ENCODE measurements at regions of chr19 and their contacts with region 1.

Region 1: GRCh38 chr19:38514812-38515633 is 81.5 kb downstream of the RYR1 start:
- DNase-seq: peak; percentile 49 to 77 (median 69)
- H3K4me3 ChIP-seq: no peak overlapping the region
- H3K27ac ChIP-seq: no peak overlapping the region
- H3K4me1 ChIP-seq: no peaks in the 10 kb centered on the region
- H3K27me3 ChIP-seq: no peaks in the 10 kb centered on the region
- CTCF ChIP-seq: peak; percentile 66 to 86 (median 76)
- POLR2A ChIP-seq: no peak

Region 2: DNA sequence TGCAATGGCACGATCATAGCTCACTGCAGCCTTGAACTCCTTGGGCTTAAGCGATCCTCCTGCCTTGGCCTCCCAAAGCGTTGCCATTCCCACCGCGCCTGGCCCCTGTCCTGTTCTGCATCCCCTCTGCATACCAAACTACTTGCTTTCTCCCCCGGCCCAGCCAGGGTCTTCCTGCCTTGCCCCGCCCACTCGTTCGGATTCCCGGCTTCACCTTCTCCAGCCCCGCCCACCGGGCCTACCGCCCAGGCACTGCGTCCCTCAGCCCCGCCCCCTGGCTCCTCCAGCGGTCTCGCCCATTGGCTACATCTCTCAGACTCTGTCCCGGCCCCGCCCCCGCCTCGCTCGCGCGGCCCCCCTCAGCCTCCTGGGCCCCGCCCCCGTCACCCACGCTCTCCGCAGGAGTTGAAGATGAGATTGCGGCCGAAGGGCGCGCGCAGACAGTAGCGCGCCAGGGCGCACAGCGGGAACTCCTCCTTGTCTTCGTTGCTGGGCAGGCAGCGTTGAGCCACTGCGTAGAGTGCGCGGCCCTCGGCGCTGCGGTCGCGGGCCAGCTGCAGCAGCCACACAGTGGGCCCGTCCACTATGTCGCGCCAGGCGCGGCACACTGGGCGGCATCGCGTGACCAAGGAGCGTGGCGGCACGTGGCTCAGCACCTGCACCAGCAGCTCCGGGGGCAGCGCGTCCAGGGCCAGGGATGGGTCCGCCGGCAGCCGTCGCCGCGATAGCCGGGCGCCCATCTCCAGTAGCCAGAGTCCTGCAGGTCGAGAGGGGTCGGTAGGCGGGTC is 434.8 kb after region 1 on chr19:
- intact Hi-C with region 1: loop called in 1 of 2 experiments (anchors 10 kb)
- DNase-seq: peak; percentile 90 to 96 (median 94)
- H3K4me3 ChIP-seq: peak overlapping the region in 2 of 4 donors; percentile 13 to 56
- H3K27ac ChIP-seq: no peak overlapping the region
- H3K4me1 ChIP-seq: peaks cover 6 to 8% of the 10 kb centered on the region in 2 donors
- H3K27me3 ChIP-seq: no peaks in the 10 kb centered on the region
- CTCF ChIP-seq: no peak
- POLR2A ChIP-seq: no peak

Measured in adrenal gland (tissue), 19 donors.